ENCODE measurements at regions of chr2 and their contacts with region 1.

Region 1: DNA sequence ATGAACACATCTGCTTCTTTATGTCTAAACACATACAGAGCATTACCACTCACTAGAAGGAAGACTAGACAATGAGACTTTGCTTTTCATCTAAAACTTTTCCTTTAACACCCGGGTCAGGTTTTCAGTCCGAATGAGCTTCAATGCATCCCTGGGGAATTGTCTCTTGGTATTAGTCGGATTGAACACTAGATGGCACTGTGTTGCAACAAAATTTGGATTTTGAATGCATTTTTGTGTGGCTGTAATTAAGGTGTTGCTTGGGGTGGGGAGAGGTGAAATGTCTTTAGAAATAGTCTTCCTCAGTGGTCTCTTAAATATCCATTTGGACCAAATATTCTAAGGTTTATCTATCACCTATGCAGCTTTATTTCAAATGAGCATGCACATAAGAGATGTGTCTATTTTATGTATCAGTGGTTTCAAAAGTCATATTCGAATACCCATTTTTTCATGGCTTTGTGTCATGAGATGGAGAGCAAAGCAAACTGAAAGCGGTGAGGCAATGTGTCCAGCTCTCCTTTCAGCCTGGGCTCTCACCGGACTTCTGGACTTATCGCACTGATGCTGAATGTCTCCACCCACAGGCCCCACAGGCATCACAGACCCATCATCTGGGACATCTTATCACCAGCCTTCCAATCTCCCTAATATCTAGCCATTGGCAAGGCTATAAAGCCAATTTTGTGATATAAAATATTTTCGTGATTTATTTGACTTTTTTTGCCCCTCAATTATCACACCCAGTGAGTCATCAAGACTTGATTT is 510.3 kb downstream of the RNF144A start:
- DNase-seq: peak in 4 of 9 experiments; percentile 11 to 83 (median 57)
- ATAC-seq: peak; percentile 46
- H3K4me3 ChIP-seq: no peak overlapping the region
- H3K4me3 Mint-ChIP-seq: no peak overlapping the region
- H3K27ac ChIP-seq: peak overlapping the region in 1 of 2 experiments; percentile 37
- H3K27ac Mint-ChIP-seq: peak overlapping the region; percentile 64
- H3K4me1 ChIP-seq: peaks cover 39% of the 10 kb centered on the region
- H3K4me1 Mint-ChIP-seq: peaks cover 49% of the 10 kb centered on the region
- H3K27me3 ChIP-seq: no peaks in the 10 kb centered on the region
- H3K27me3 Mint-ChIP-seq: no peaks in the 10 kb centered on the region
- CTCF ChIP-seq: peak; percentile 94

Region 2: DNA sequence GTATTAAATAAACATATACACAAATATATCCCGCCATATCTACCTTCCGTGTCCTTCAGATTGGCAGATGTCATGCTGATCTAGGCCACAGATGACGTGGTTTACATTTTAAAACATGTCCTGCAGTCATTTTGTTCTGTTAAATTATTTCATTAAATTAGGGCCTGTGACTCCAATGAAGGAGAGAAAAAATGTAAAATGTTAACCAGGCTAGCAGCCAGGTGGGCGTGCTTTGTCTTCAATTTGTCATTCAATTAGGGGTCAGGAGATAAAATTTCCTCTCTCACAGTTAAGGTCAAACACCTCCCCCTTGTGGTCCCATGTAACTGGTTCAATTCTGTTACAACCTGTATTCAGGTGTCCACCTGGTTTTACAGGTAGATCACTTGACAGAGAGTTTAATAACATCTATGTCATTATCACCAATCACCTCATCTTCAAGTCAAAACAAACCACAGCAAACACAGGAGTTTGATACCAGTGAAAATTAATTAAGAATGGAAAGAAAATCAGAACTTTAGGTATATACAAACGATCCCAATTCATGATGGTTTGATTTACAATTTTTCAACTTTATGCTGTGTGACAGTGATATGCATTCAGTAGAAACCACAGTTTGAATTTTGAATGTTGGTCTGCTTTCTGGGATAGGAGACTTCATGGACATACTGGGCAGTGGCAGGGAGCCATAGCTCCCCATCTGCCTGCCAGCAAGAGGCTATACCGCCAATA is 901.2 kb before region 1 on chr2:
- CTCF ChIA-PET with region 1: no interaction called
- POLR2A ChIA-PET with region 1: no interaction called
- intact Hi-C with region 1: no loop called
- DNase-seq: no peak
- ATAC-seq: no peak
- H3K4me3 ChIP-seq: no peak overlapping the region
- H3K4me3 Mint-ChIP-seq: no peak overlapping the region
- H3K27ac ChIP-seq: no peak overlapping the region
- H3K27ac Mint-ChIP-seq: no peak overlapping the region
- H3K4me1 ChIP-seq: no peaks in the 10 kb centered on the region
- H3K4me1 Mint-ChIP-seq: no peaks in the 10 kb centered on the region
- H3K27me3 ChIP-seq: no peaks in the 10 kb centered on the region
- H3K27me3 Mint-ChIP-seq: peaks cover 2% of the 10 kb centered on the region
- CTCF ChIP-seq: no peak

Region 3: GRCh38 chr2:7444626-7445025 is 17.1 kb after region 1 on chr2:
- CTCF ChIA-PET with region 1: interaction called, 31 read pairs
- POLR2A ChIA-PET with region 1: interaction called, 12 read pairs
- intact Hi-C with region 1: loop called in 1 of 2 experiments (anchors 2 kb)
- DNase-seq: peak in 1 of 9 experiments; percentile 52
- ATAC-seq: peak; percentile 38
- H3K4me3 ChIP-seq: no peak overlapping the region
- H3K4me3 Mint-ChIP-seq: no peak overlapping the region
- H3K27ac ChIP-seq: no peak overlapping the region
- H3K27ac Mint-ChIP-seq: peak overlapping the region; percentile 27
- H3K4me1 ChIP-seq: peaks cover 28% of the 10 kb centered on the region
- H3K4me1 Mint-ChIP-seq: peaks cover 79% of the 10 kb centered on the region
- H3K27me3 ChIP-seq: no peaks in the 10 kb centered on the region
- H3K27me3 Mint-ChIP-seq: no peaks in the 10 kb centered on the region
- CTCF ChIP-seq: no peak

Region 4: GRCh38 chr2:7492719-7493118 is 65.2 kb after region 1 on chr2:
- CTCF ChIA-PET with region 1: no interaction called
- POLR2A ChIA-PET with region 1: no interaction called
- intact Hi-C with region 1: no loop called
- DNase-seq: no peak
- ATAC-seq: no peak
- H3K4me3 ChIP-seq: no peak overlapping the region
- H3K4me3 Mint-ChIP-seq: no peak overlapping the region
- H3K27ac ChIP-seq: no peak overlapping the region
- H3K27ac Mint-ChIP-seq: no peak overlapping the region
- H3K4me1 ChIP-seq: peaks cover 5% of the 10 kb centered on the region
- H3K4me1 Mint-ChIP-seq: peaks cover 15% of the 10 kb centered on the region
- H3K27me3 ChIP-seq: no peaks in the 10 kb centered on the region
- H3K27me3 Mint-ChIP-seq: no peaks in the 10 kb centered on the region
- CTCF ChIP-seq: no peak

Region 5: DNA sequence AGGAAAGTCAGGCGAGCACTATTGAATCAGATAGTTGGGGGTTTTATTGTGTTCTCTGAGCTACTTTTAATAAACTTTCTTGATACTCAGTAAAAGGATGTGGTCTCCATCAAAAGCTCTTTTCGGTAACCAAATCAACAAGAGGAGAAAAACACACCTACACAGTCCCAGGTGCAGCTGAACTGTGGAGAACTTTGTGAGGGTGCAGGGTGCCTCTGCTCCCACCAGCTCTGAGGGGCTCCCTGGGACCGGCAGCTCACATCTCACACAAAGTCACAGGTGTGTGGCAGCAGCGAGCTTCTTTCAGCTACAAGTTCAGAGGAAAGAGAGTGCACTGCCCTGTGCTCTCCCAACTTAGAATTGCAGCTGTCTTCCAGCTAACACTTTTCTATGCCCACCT is 140.2 kb after region 1 on chr2:
- CTCF ChIA-PET with region 1: interaction called, 70 read pairs
- POLR2A ChIA-PET with region 1: interaction called, 32 read pairs
- intact Hi-C with region 1: loop called (anchors 1 to 5 kb)
- DNase-seq: peak; percentile 35 to 88 (median 66)
- ATAC-seq: peak; percentile 92
- H3K4me3 ChIP-seq: no peak overlapping the region
- H3K4me3 Mint-ChIP-seq: peak overlapping the region; percentile 32
- H3K27ac ChIP-seq: peak overlapping the region; percentile 34 to 53
- H3K27ac Mint-ChIP-seq: peak overlapping the region; percentile 87
- H3K4me1 ChIP-seq: peaks cover 61% of the 10 kb centered on the region
- H3K4me1 Mint-ChIP-seq: peaks cover 71% of the 10 kb centered on the region
- H3K27me3 ChIP-seq: no peaks in the 10 kb centered on the region
- H3K27me3 Mint-ChIP-seq: no peaks in the 10 kb centered on the region
- CTCF ChIP-seq: no peak

Region 6: GRCh38 chr2:7725171-7725849 is 297.8 kb after region 1 on chr2:
- CTCF ChIA-PET with region 1: interaction called, 18 read pairs
- POLR2A ChIA-PET with region 1: interaction called, 10 read pairs
- intact Hi-C with region 1: loop called in 1 of 2 experiments (anchors 5 kb)
- DNase-seq: peak in 7 of 9 experiments; percentile 18 to 91 (median 32)
- ATAC-seq: peak; percentile 79
- H3K4me3 ChIP-seq: peak overlapping the region; percentile 48 to 58
- H3K4me3 Mint-ChIP-seq: peak overlapping the region; percentile 90
- H3K27ac ChIP-seq: peak overlapping the region; percentile 6 to 77
- H3K27ac Mint-ChIP-seq: peak overlapping the region; percentile 94
- H3K4me1 ChIP-seq: peaks cover 29% of the 10 kb centered on the region
- H3K4me1 Mint-ChIP-seq: peaks cover 70% of the 10 kb centered on the region
- H3K27me3 ChIP-seq: no peaks in the 10 kb centered on the region
- H3K27me3 Mint-ChIP-seq: no peaks in the 10 kb centered on the region
- CTCF ChIP-seq: no peak

Region 7: DNA sequence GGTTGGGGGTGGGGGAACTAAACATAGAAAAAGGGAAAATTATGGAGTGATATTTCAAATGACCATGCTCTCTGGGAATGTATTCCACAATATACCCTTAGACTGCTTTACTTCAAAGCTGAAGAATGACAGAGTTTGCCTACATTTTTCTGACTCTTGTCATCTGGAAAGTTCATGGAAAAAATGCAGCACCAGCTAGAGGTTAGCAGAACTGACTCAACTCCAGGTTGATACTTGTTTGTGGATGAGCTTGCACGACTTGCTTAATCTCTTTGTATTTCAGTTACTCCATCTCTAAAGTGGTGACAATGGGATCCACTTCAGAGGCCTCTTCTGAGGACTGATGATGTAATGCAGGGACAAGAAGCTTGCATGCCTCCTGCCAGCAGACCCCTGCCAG is 430.4 kb after region 1 on chr2:
- CTCF ChIA-PET with region 1: no interaction called
- POLR2A ChIA-PET with region 1: no interaction called
- intact Hi-C with region 1: loop called in 1 of 2 experiments (anchors 10 kb)
- DNase-seq: no peak
- ATAC-seq: no peak
- H3K4me3 ChIP-seq: no peak overlapping the region
- H3K4me3 Mint-ChIP-seq: no peak overlapping the region
- H3K27ac ChIP-seq: no peak overlapping the region
- H3K27ac Mint-ChIP-seq: no peak overlapping the region
- H3K4me1 ChIP-seq: no peaks in the 10 kb centered on the region
- H3K4me1 Mint-ChIP-seq: no peaks in the 10 kb centered on the region
- H3K27me3 ChIP-seq: no peaks in the 10 kb centered on the region
- H3K27me3 Mint-ChIP-seq: no peaks in the 10 kb centered on the region
- CTCF ChIP-seq: no peak

Region 8: DNA sequence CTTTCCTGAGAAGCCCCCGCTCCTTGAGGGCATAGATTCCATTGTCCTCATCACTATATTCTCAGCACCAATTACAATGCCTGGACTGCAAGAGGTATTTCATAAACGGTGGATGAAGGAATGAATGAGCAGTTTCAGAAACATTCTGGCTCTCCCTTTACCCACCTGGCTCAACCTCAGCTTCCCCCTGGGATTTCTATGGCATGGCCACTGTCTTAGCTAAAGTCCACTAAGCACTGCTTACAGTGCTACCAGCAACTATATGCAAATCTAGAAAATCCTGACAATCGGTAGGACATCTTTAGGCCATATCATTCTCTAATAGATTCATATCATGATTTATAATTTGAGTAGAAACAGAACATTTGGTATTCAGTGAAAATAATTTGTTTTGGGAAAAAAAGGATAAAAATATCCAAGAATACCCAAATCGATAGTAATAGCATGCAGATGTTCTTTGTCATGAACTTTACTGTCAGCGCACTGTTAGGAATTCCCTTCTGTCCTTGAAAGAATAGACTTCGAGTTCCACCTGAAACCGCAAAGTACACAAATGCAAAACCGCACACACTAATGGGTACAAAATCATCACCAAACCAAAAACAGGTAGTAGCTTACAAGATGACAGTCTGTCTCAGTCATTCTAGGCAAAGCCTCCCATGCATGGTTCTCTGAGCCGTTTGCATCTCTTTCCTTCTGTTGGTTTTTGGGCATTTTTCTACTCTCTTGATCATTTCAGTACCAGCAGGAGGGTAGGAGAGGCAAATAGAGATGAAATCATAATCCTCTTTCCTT is 950.7 kb after region 1 on chr2:
- CTCF ChIA-PET with region 1: no interaction called
- POLR2A ChIA-PET with region 1: no interaction called
- intact Hi-C with region 1: loop called in 1 of 2 experiments (anchors 10 kb)
- DNase-seq: no peak
- ATAC-seq: no peak
- H3K4me3 ChIP-seq: no peak overlapping the region
- H3K4me3 Mint-ChIP-seq: no peak overlapping the region
- H3K27ac ChIP-seq: no peak overlapping the region
- H3K27ac Mint-ChIP-seq: no peak overlapping the region
- H3K4me1 ChIP-seq: peaks cover 9% of the 10 kb centered on the region
- H3K4me1 Mint-ChIP-seq: peaks cover 20% of the 10 kb centered on the region
- H3K27me3 ChIP-seq: no peaks in the 10 kb centered on the region
- H3K27me3 Mint-ChIP-seq: no peaks in the 10 kb centered on the region
- CTCF ChIP-seq: no peak

Measured in CD8-positive, alpha-beta T cell (primary cell).